ENCODE measurements at regions of chr14 and their contacts with region 1.

Region 1: DNA sequence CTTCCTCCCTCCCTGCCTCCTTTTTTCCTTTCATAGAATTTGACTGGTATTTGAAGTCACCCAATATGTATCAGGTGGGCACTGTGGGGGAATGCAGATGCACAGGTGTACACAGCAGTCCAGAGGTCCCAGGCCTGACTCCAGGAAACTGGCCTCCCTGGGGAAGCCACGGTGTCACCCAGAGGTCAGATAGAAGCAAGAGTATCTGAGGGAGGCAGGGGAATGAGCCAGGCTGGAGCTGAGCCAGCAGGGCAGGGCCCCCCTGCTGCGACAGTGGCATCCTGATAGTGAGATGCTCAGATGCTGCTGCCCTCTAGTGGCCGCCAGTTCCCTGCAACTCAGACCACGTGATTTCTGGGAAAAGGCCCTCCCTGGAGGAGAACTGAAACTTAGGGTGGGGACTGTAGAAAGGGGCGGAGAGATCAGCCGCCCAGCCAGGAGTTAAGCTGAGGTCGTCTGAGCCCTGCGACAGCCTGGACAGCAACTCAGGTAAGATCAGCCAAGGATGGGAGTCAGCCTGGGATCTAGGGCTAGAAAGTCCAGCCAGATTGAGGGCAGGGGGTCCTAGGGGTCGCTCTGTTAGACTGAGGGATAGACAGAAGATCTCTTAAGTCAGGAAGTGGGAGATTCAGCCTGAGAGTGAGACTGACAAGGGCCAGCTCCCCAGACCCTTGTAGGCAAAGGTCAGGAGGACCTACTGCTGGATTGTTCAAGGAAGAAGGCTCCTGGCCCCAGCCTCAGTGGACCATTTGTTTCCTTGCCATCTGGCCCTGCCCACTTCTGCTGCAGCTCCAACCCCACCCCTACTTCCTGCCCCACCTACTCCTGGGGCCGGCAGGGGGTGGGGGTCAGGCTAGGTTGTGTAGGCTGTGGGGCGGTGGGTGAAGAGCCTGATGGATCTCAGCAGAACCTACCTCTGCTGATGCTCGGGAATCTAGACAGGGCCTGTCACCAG is at the start of gene IRF9:
- DNase-seq: peak; percentile 96 to 98 (median 96)
- H3K4me3 ChIP-seq: peak within 1 kb of the TSS; percentile 59 to 92 (median 86)
- H3K27ac ChIP-seq: peak within 1 kb of the TSS; percentile 94 to 96
- H3K4me1 ChIP-seq: peaks cover 10 to 28% (median 19%) of the 10 kb centered on the region in 4 experiments
- H3K27me3 ChIP-seq: no peaks in the 10 kb centered on the region

Region 2: DNA sequence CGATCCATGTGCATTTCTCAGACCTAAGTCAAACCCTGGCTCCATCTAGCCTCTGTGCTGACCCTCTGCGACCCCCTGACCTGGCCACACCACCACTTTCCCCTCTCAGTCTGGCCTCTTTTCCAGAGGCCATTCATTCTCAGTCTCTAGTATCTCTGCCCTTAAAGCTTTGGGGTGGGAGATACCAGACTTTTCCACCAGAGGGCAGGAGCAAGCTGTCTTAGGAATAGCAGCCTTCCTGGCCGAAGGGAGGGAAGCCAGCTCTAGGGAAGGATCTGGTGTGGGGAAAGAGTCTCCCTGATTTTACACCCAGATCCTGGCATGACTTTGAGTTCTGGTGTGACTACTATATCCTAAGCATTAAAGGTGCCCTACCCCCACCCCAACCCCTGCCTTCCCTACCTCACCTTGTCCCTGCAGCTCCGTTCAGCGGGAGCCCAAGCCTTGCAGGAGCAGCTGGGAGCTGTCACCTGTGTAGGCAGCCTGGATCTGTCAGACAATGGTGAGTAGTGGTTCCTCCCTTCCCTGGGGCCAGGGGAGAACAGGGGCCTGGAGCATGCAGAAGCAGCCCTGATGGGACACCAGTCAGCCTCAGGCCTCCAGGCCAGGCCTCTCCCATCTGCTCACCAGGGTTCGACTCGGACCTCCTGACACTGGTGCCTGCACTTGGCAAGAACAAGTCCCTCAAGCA is 102.7 kb before region 1 on chr14:
- CTCF ChIA-PET with region 1: interaction called, 11 read pairs
- POLR2A ChIA-PET with region 1: no interaction called
- DNase-seq: peak in 2 of 3 donors; percentile 20 to 42
- H3K4me3 ChIP-seq: no peak overlapping the region
- H3K27ac ChIP-seq: no peak overlapping the region
- H3K4me1 ChIP-seq: no peaks in the 10 kb centered on the region
- H3K27me3 ChIP-seq: peaks cover 0 to 7% (median 1%) of the 10 kb centered on the region in 5 experiments

Region 3: GRCh38 chr14:24080888-24081738 is 80.0 kb before region 1 on chr14:
- CTCF ChIA-PET with region 1: no interaction called
- POLR2A ChIA-PET with region 1: no interaction called
- DNase-seq: peak; percentile 43 to 84 (median 80)
- H3K4me3 ChIP-seq: peak overlapping the region; percentile 60 to 81 (median 67)
- H3K27ac ChIP-seq: no peak overlapping the region
- H3K4me1 ChIP-seq: peaks cover 7 to 27% (median 26%) of the 10 kb centered on the region in 4 experiments
- H3K27me3 ChIP-seq: peaks cover 0 to 12% (median 7%) of the 10 kb centered on the region in 5 experiments

Region 4: DNA sequence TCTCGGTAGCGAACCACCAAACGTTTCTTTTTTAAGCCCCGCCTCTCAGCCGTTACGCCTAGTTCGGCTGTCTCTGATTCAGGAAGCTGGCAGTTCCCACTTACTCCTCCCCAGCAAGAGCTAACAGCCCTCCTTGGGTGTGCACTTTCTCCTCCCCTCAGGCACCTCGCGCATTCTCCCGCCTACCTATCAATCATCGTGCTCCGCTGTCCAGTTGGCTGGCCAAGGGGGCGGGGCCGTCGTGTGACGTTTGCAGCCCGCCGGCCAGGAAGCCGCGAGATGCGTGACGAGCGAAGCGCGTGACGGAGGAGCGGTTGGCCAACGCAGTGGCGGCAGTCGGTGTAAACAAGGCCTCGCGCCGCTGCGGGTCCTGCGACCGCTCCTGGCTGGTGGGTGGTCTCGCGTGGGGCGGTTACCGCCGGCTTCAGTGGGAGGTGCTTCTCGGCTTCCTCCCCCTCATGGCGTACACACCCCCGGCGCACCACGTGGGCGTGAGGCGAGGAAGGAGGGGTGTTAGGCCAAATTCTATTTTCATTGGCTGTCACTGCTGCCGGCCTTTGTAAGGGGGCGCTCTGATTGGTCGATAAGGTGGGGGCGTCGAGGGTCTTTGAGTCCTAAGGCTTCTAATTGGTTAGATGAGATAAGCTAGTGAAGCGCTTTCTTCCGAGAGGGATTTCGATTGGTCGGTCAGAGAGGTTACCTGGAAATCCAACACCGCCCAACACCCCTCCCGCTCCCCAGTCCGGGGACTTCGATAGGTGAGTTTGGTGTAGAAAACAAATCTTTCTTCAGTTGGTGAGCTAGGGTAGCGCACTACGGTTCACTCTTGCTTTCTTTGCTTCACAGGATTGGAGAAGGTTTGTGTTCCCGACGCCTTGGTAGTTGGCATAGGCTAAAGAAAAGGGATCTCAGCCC is 46.3 kb before region 1 on chr14 and contains the starts of genes DCAF11 and NRL:
- CTCF ChIA-PET with region 1: interaction called, 18 read pairs
- POLR2A ChIA-PET with region 1: interaction called, 9 read pairs
- DNase-seq: peak; percentile 100
- H3K4me3 ChIP-seq: peak within 1 kb of the TSS; percentile 51 to 98 (median 91)
- H3K27ac ChIP-seq: peak within 1 kb of the TSS; percentile 95 to 98
- H3K4me1 ChIP-seq: peaks cover 8 to 33% (median 19%) of the 10 kb centered on the region in 4 experiments
- H3K27me3 ChIP-seq: no peaks in the 10 kb centered on the region

Region 5: GRCh38 chr14:24141097-24141880 is 19.8 kb before region 1 on chr14 and contains the start of gene EMC9:
- CTCF ChIA-PET with region 1: interaction called, 112 read pairs
- POLR2A ChIA-PET with region 1: interaction called, 16 read pairs
- DNase-seq: peak; percentile 99 to 100 (median 100)
- H3K4me3 ChIP-seq: peak within 1 kb of the TSS; percentile 80 to 98 (median 87)
- H3K27ac ChIP-seq: peak within 1 kb of the TSS; percentile 53 to 85
- H3K4me1 ChIP-seq: peaks cover 6 to 56% (median 46%) of the 10 kb centered on the region in 4 experiments
- H3K27me3 ChIP-seq: no peaks in the 10 kb centered on the region

Region 6: DNA sequence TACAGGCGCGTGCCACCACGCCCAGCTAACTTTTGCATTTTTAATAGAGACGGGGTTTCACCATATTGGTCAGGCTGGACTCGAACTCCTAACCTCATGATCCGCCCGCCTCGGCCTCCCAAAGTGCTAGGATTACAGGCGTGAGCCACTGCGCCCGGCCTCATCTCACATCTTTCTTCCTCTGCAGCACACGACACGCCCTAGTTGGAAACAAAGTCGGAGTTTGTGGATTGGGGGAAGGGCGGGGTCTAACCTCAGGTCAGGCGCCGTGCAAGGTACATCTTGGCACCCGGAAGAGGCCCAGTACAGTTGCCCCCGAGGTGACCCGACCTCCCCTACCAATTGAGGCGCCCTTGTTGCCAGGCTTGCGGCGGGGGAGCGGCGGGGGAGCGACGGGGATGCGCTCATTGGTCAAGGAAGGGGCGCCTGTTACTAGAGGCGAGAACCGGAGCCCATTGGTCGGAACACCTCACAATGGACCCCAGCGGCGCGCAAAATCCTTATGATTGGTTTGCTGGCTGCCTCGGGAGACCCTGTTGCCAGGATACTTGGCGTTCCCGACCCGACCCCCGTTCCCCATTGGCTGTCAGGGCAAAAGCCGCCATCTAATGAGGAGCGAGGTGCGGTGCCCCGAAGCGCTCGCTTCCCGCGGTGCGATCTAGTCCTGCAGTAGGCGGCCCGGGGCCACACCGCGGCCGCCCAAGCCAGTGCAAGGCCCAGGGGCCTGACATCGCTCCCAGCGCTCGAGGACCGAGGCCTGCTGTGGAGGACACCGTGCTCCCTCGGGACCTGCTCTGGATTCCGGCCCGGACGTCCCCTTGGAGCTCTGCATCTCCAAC is 10.5 kb after region 1 on chr14 and contains the start of gene REC8:
- CTCF ChIA-PET with region 1: interaction called, 8 read pairs
- POLR2A ChIA-PET with region 1: interaction called, 15 read pairs
- DNase-seq: peak; percentile 97 to 99 (median 99)
- H3K4me3 ChIP-seq: peak within 1 kb of the TSS; percentile 20 to 95 (median 81)
- H3K27ac ChIP-seq: peak within 1 kb of the TSS in 1 of 2 experiments; percentile 66
- H3K4me1 ChIP-seq: peaks cover 2 to 27% (median 12%) of the 10 kb centered on the region in 4 experiments
- H3K27me3 ChIP-seq: no peaks in the 10 kb centered on the region

Region 7: GRCh38 chr14:24224618-24225071 is 63.5 kb after region 1 on chr14:
- CTCF ChIA-PET with region 1: no interaction called
- POLR2A ChIA-PET with region 1: no interaction called
- DNase-seq: no peak
- H3K4me3 ChIP-seq: no peak overlapping the region
- H3K27ac ChIP-seq: no peak overlapping the region
- H3K4me1 ChIP-seq: no peaks in the 10 kb centered on the region
- H3K27me3 ChIP-seq: no peaks in the 10 kb centered on the region